Esophagus muscularis mucosa (tissue), 4 donors: ENCODE measurements at regions of chr3 and their contacts with region 1.

Region 1: DNA sequence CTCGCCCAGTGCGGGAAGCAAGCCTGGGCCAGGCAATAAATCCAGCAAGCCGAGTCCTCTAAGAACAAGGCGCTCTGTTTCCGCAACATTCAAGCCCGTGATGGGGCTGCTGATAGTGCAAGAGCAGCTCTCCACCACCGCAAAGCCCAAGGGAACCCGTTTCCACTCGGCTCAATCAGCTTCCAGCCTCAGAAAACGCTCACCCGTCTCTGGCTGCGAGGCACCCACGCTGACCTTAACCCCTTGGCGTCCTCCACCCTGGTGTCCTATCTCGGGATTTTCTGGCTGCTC is 17.8 kb downstream of the SPATA12 start:
- DNase-seq: no peak
- H3K4me3 ChIP-seq: peak overlapping the region; percentile 77 to 90 (median 80)
- H3K27ac ChIP-seq: peak overlapping the region; percentile 65 to 81 (median 74)
- H3K4me1 ChIP-seq: peaks cover 12 to 25% (median 20%) of the 10 kb centered on the region in 4 donors
- H3K27me3 ChIP-seq: no peaks in the 10 kb centered on the region
- CTCF ChIP-seq: no peak
- EP300 ChIP-seq: no peak
- POLR2A ChIP-seq: no peak

Region 2: GRCh38 chr3:56801662-56802377 is 276.5 kb before region 1 on chr3 and contains the start of gene ARHGEF3:
- intact Hi-C with region 1: loop called (anchors 10 kb)
- DNase-seq: no peak
- H3K4me3 ChIP-seq: peak within 1 kb of the TSS; percentile 68 to 81 (median 73)
- H3K27ac ChIP-seq: peak within 1 kb of the TSS; percentile 50 to 71 (median 62)
- H3K4me1 ChIP-seq: peaks cover 29 to 55% (median 45%) of the 10 kb centered on the region in 4 donors
- H3K27me3 ChIP-seq: no peaks in the 10 kb centered on the region
- CTCF ChIP-seq: peak; percentile 33 to 39 (median 36)
- EP300 ChIP-seq: no peak
- POLR2A ChIP-seq: peak; percentile 48
- total RNA-seq, gene ARHGEF3: 9.0 to 14.7 (median 11.7) TPM

Region 3: GRCh38 chr3:56997675-56998074 is 80.6 kb before region 1 on chr3:
- intact Hi-C with region 1: loop called (anchors 5 kb)
- DNase-seq: no peak
- H3K4me3 ChIP-seq: no peak overlapping the region
- H3K27ac ChIP-seq: peak overlapping the region; percentile 35 to 79 (median 56)
- H3K4me1 ChIP-seq: peaks cover 0 to 31% (median 26%) of the 10 kb centered on the region in 4 donors
- H3K27me3 ChIP-seq: no peaks in the 10 kb centered on the region
- CTCF ChIP-seq: no peak
- EP300 ChIP-seq: no peak
- POLR2A ChIP-seq: no peak

Region 4: DNA sequence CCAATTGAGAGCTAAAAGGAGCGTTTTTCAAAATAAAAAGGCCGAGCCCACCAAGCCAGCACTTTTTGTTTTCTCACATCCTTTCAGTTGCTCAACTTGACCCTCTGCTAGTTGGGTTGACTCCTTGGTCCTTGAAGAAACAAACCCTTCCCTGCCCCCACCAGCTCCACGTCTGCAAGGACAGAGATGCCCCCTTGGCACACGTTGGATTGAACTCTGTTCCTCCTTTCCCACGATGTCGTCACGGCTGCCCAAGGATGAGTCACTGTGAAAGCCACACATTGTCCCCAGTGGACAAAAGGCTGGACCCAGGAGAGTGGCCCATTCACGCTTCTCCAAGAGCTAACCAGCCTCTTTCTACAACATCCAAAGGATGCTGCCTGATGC is 60.8 kb before region 1 on chr3:
- intact Hi-C with region 1: no loop called
- DNase-seq: no peak
- H3K4me3 ChIP-seq: no peak overlapping the region
- H3K27ac ChIP-seq: peak overlapping the region in 1 of 4 donors; percentile 16
- H3K4me1 ChIP-seq: peaks cover 8 to 26% (median 24%) of the 10 kb centered on the region in 4 donors
- H3K27me3 ChIP-seq: no peaks in the 10 kb centered on the region
- CTCF ChIP-seq: no peak
- EP300 ChIP-seq: no peak
- POLR2A ChIP-seq: no peak

Region 5: GRCh38 chr3:57598765-57599360 is 520.6 kb after region 1 on chr3:
- intact Hi-C with region 1: no loop called
- DNase-seq: no peak
- H3K4me3 ChIP-seq: peak overlapping the region; percentile 67 to 89 (median 72)
- H3K27ac ChIP-seq: peak overlapping the region; percentile 91 to 99 (median 94)
- H3K4me1 ChIP-seq: peaks cover 32 to 35% (median 32%) of the 10 kb centered on the region in 4 donors
- H3K27me3 ChIP-seq: no peaks in the 10 kb centered on the region
- CTCF ChIP-seq: no peak
- EP300 ChIP-seq: no peak
- POLR2A ChIP-seq: no peak